HEK293T (cell line): ENCODE measurements at regions of chr1 and their contacts with region 1.

Region 1: DNA sequence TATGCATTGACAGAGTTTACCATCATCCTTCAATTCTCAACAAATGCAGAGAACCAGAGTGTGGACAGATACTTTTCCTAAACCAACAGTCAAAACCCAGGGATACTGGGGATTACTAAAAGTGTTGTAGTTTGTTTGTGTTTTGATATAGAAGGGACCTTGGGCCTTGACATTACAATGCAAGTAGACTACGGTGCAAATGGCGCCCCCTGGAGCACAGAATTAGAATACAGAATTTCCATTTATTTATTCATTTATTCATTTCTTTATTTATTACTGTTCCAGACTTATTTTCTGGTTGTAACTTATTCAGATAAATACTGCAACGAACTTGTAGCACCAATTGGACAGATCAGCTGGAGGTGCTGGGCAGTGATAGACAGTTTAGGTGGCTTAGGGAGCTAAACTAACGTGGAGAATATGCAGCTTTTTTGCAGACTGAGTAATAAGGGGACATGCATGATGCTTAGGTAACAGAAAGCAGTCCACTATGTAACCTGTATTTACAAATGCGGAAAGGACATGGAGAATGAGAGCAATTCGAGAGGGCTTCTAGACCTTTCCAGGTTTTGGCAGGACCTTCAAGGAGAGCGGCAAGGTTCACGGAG is 42.6 kb downstream of the KIRREL1 start:
- DNase-seq: peak; percentile 36

Region 2: GRCh38 chr1:158002022-158002630 is 34.0 kb before region 1 on chr1:
- CTCF ChIA-PET with region 1: interaction called, 11 read pairs
- POLR2A ChIA-PET with region 1: interaction called, 3 read pairs
- DNase-seq: no peak

Region 3: GRCh38 chr1:158019171-158019868 is 16.8 kb before region 1 on chr1:
- CTCF ChIA-PET with region 1: interaction called, 21 read pairs
- POLR2A ChIA-PET with region 1: interaction called, 3 read pairs
- DNase-seq: peak; percentile 38